ENCODE measurements at regions of chr17 and their contacts with region 1.

Region 1: DNA sequence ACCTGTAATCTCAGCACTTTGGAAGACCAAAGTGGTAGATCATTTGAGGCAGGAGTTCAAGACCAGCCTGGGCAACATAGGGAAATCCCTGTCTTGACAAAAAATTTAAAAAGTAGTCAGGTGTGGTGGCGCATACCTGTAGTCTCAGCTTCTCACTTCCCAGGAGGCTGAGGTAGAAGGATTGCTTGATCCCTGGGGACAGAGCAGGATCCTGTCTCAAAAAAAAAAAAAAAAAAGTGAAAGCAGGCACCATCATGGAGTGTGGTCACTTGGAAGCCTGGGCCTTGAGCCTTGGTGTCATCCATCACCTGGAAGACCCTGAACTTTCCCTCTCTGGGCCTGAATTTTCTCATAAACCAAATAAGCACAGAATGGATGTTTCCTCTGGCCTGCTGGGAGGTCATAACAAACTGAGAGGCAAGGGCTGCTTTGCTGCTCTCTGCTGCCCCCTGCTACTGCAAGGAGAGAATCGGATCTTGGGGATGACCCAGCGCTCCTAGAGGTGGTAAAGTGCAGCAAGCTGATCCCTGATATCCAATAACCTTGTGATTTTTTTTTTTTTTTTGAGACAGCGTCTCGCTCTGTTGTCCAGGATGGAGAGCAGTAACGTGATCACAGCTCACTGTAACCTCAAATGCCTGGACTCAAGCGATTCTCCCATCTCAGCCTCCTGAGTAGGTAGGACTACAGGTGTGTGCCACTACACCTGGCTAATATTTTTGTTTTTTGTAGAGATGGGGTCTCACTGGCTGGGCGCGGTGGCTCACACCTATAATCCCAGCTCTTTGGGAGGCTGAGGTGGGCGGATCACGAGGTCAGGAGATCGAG is 75.9 kb upstream of the RNU2-1 start:
- DNase-seq: peak in 2 of 5 donors; percentile 8 to 34
- H3K4me3 ChIP-seq: no peak overlapping the region
- H3K4me3 Mint-ChIP-seq: no peak overlapping the region
- H3K27ac ChIP-seq: no peak overlapping the region
- H3K27ac Mint-ChIP-seq: peak overlapping the region in 1 of 7 donors; percentile 10
- H3K4me1 ChIP-seq: no peaks in the 10 kb centered on the region
- H3K4me1 Mint-ChIP-seq: no peaks in the 10 kb centered on the region
- H3K27me3 ChIP-seq: no peaks in the 10 kb centered on the region
- H3K27me3 Mint-ChIP-seq: no peaks in the 10 kb centered on the region

Region 2: GRCh38 chr17:43327421-43327820 is 17.7 kb after region 1 on chr17:
- CTCF ChIA-PET with region 1: interaction called, 208 read pairs
- POLR2A ChIA-PET with region 1: no interaction called
- intact Hi-C with region 1: no loop called
- DNase-seq: no peak
- H3K4me3 ChIP-seq: no peak overlapping the region
- H3K4me3 Mint-ChIP-seq: no peak overlapping the region
- H3K27ac ChIP-seq: no peak overlapping the region
- H3K27ac Mint-ChIP-seq: no peak overlapping the region
- H3K4me1 ChIP-seq: no peaks in the 10 kb centered on the region
- H3K4me1 Mint-ChIP-seq: peaks cover 0 to 6% (median 3%) of the 10 kb centered on the region in 4 donors
- H3K27me3 ChIP-seq: peaks cover 8% of the 10 kb centered on the region
- H3K27me3 Mint-ChIP-seq: peaks cover 7 to 19% of the 10 kb centered on the region in 2 donors

Measured in CD4-positive, alpha-beta memory T cell (primary cell).